ENCODE measurements at regions of chr3 and their contacts with region 1.

Region 1: GRCh38 chr3:17771177-17772017 is 29.0 kb upstream of the TBC1D5 start:
- DNase-seq: no peak
- H3K4me3 Mint-ChIP-seq: no peak overlapping the region
- H3K27ac Mint-ChIP-seq: no peak overlapping the region
- H3K4me1 Mint-ChIP-seq: peaks cover 24% of the 10 kb centered on the region
- H3K27me3 Mint-ChIP-seq: peaks cover 26% of the 10 kb centered on the region

Region 2: DNA sequence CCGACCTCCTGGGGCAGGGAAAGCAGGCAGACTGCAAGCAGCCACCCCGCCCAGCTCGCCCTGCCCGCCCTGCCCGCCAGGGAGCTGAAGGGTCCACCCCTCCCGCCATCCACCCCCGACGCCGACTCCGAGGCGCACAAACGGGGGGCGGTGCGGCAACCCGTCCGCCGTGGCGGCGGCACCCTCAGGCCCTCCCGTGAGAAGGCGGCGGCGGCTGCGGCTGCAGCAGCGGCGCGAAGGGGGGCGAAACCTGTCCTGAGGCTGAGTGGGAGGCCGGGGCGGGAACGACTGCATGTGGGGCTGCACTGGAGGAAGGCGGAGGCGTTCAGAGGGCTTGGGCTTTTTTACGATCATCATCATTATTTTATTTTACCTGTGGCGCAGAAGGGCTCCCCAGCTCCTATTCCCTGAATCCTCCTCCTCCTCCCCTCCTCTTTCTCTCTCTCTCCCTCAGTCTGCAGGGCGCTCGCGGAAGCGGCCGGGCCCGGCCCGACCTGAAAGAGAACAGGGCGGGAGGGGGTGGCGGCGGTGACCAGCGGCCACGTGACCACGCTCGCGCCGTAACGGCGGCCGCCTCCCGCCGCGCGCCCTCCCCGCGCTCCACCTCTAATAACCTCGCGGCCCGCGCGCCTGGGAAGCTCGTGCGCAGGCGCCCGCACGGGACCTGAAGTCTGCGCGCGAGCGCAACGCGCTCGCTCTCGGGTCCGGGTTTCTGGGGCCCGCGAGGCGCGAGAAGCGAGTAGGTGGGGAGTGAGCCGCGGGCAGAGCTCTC is 29.1 kb before region 1 on chr3 and contains the start of gene TBC1D5:
- intact Hi-C with region 1: loop called (anchors 1 kb)
- DNase-seq: peak; percentile 93
- H3K4me3 Mint-ChIP-seq: peak within 1 kb of the TSS; percentile 93
- H3K27ac Mint-ChIP-seq: peak within 1 kb of the TSS; percentile 98
- H3K4me1 Mint-ChIP-seq: peaks cover 40% of the 10 kb centered on the region
- H3K27me3 Mint-ChIP-seq: no peaks in the 10 kb centered on the region
- total RNA-seq, gene TBC1D5: 40.2 and 43.9 TPM in 2 replicates

Measured in activated T-helper 2 cell treated with anti-CD3 and anti-CD28 coated beads, Interferon-gamma antibody, Interleukin-2, Interleukin-4, amounts not matched to agents 10 μg/mL and 5 μg/mL and 100 μg/mL, durations not matched to agents 14 hours and 24 hours and 36 hours (primary cell).